ENCODE measurements at regions of chr2 and their contacts with region 1.

Region 1: DNA sequence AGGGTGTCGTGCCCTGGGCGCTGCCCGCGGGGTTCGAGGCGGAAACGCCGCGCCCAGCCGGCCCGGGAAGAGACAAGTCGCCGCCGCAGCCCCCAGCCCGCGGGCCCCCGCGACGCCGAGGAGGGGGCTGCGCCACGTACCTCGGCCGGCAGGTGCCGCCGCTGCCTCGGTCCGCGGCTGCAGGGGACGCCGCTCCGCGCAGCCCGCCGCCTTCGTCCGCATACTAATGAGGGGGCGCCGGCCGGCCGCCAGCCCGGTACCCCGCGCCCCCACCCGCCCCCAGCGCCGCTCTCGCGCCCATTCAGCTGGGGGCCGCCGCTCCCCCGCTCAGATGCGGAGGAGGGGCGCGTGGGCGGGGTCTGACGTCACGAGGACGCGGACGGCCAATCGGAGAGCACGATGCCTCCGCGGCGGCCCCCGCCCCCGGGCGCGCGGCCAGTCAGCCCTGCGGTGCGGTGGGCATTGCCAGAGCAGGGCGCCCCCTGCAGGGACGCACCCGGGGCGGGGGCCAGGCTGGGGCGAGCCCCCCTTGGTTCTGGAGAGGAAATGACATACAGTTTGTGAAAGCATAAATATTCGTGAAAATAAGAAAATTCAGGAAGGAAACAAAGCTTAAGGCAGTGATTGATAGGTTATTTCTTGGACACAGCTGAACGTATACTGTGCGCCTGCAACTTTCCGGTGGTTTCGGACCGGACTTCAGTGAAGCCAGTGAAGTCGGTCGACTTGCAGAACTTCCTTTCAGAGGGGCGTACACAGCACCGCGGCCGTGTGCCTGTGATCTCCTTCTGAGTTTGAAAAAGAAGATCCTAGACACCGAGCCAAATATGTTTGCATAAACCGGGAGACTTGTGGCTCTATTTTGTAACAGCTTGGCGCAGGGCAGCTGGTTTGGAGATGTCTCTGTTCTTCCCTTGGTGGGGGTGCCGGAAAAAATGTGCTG is at the start of gene ST3GAL5:
- DNase-seq: peak; percentile 91
- H3K4me3 ChIP-seq: peak within 1 kb of the TSS; percentile 66 to 87 (median 72)
- H3K27ac ChIP-seq: peak within 1 kb of the TSS; percentile 82 to 87 (median 85)
- H3K4me1 ChIP-seq: peaks cover 14 to 42% (median 21%) of the 10 kb centered on the region in 4 donors
- H3K27me3 ChIP-seq: no peaks in the 10 kb centered on the region
- CTCF ChIP-seq: peak; percentile 48 to 69 (median 55)
- EP300 ChIP-seq: no peak
- POLR2A ChIP-seq: peak; percentile 55
- total RNA-seq, gene ST3GAL5: 3.0 to 20.2 (median 13.6) TPM

Region 2: GRCh38 chr2:86079981-86080911 is 191.3 kb after region 1 on chr2:
- in situ Hi-C with region 1: loop called in 2 of 4 experiments (anchors 10 kb)
- intact Hi-C with region 1: loop called (anchors 10 kb)
- DNase-seq: peak; percentile 91
- H3K4me3 ChIP-seq: no peak overlapping the region
- H3K27ac ChIP-seq: peak overlapping the region; percentile 13 to 49 (median 41)
- H3K4me1 ChIP-seq: peaks cover 4 to 14% (median 11%) of the 10 kb centered on the region in 4 donors
- H3K27me3 ChIP-seq: no peaks in the 10 kb centered on the region
- CTCF ChIP-seq: peak; percentile 69 to 87 (median 78)
- EP300 ChIP-seq: no peak
- POLR2A ChIP-seq: peak; percentile 10

Region 3: DNA sequence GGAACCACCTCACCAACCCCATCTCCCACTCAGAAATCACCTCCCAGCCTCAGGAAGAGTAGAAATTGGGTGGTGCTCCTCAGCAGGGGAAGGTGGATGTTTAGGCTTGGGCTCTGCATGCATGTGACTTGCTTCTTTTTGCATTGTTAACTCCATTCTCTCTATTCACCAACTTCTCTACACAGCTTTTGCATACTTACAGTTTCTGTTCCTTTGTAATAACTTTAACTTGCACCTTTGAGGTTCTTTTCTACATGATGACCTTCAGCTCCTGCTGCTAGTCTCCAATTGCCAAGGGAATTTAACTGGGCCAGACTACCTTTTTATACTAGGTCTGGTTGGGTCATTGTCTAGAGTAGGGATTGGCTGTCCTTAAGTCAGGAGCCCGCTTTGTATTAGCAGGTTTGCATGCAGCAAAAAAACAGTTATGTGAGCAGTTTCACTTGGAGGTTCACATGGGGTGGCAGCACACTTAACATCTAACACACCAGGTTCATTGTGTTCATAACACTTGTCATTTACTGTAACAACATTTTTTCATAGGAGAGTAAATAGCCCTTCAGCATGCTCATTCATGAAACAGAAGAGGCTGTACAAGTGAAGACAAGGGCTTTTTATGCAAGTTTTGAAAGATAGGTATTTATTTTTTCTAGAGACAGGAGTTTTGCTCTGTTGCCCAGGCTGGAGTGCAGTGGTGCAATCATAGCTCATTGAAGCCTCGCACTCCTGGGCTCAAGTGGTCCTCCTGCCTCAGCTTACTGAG is 322.3 kb after region 1 on chr2:
- in situ Hi-C with region 1: no loop called
- intact Hi-C with region 1: no loop called
- DNase-seq: no peak
- H3K4me3 ChIP-seq: no peak overlapping the region
- H3K27ac ChIP-seq: peak overlapping the region in 3 of 4 donors; percentile 15 to 68 (median 17)
- H3K4me1 ChIP-seq: peaks cover 6 to 44% (median 21%) of the 10 kb centered on the region in 4 donors
- H3K27me3 ChIP-seq: no peaks in the 10 kb centered on the region
- CTCF ChIP-seq: no peak
- EP300 ChIP-seq: no peak
- POLR2A ChIP-seq: no peak

Measured in transverse colon (tissue), 4 donors.